ENCODE measurements at regions of chr1 and their contacts with region 1.

Region 1: DNA sequence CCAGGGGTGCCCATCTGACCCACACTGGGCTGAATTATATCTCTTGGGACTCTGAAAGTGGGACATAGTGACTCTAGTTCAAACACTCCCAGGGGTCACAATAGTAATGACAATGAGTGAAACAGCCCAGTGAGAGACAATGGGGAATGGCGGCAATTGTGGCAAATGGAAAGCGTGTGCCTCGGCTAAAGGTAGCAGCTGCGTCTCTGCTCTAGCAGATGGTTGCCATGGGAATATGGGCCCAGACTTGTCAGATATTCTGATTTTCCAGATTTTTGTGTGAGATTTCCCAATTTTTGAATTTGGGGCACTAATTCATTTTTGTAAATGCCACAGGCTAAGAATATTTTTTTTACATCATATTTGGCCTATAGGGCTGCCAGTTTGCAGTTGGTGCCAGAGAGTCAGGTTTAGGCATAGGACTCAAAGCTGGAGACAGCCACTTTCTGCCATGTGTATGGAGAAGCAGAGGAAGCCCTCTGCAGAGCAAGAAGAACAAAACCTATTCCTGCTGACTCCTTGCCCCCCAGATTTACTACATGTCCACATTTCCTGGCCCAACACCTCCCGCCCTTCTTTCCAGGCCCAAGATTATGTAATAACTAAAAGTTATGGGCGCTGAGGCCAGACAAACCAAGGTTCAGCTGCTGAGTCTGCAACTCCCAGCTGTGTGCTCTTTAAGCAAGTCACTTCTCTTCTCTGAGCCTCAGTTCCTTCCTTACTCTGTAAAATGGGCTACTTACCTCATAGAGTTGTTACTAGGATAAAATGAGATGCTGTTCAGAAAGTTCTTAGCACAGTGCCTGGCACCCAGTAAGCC is 21.6 kb upstream of the PTP4A2 start:
- DNase-seq: no peak
- H3K4me3 ChIP-seq: no peak overlapping the region
- H3K27ac ChIP-seq: no peak overlapping the region
- H3K4me1 ChIP-seq: peaks cover 15% of the 10 kb centered on the region
- H3K27me3 ChIP-seq: no peaks in the 10 kb centered on the region
- CTCF ChIP-seq: no peak

Region 2: DNA sequence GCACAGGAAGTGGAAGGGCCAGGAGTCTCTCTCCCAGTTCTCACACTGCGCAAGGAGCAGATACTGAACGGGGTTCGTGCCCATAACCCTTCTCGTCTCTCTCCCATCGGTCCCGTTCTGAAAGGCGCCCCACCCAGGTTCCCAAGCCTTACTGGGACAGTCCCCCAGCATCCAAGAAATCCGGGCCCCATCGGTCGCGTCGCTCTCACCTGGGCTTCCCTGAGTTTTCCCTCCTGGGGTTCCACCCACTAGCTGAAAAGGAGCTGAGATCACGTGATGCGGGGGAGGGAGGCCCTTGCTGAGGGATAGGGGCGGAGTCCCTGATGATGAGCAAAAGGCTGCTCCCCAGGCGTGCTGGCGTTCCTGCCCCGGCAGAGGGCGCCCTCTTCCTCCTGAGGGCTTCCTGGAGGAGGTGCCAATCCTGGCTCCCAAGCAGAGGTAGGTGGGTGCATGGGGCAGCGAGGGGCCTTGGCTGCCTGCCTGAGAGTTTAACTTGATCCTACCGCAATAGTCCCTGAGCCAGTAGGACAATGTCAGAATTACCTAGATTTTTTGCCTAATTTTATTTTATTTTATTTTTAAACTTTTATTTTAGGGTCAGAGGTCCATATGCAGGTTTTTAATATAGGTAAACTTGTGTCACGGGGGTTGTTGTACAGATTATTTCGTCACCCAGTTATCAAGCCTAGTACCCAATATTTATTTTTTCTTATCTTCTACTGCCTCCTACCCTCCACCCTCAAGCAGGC is 143.8 kb before region 1 on chr1 and contains the start of gene SPOCD1:
- intact Hi-C with region 1: loop called (anchors 5 kb)
- DNase-seq: peak; percentile 94
- H3K4me3 ChIP-seq: no peak within 1 kb of the TSS
- H3K27ac ChIP-seq: no peak within 1 kb of the TSS
- H3K4me1 ChIP-seq: no peaks in the 10 kb centered on the region
- H3K27me3 ChIP-seq: no peaks in the 10 kb centered on the region
- CTCF ChIP-seq: peak; percentile 86
- total RNA-seq, gene SPOCD1: 0.45 to 0.59 TPM

Region 3: GRCh38 chr1:31926853-31927660 is 32.7 kb before region 1 on chr1:
- intact Hi-C with region 1: loop called (anchors 5 kb)
- DNase-seq: no peak
- H3K4me3 ChIP-seq: no peak overlapping the region
- H3K27ac ChIP-seq: no peak overlapping the region
- H3K4me1 ChIP-seq: peaks cover 25% of the 10 kb centered on the region
- H3K27me3 ChIP-seq: no peaks in the 10 kb centered on the region
- CTCF ChIP-seq: no peak